HepG2 (cell line): ENCODE measurements at regions of chr2 and their contacts with region 1.

Region 1: DNA sequence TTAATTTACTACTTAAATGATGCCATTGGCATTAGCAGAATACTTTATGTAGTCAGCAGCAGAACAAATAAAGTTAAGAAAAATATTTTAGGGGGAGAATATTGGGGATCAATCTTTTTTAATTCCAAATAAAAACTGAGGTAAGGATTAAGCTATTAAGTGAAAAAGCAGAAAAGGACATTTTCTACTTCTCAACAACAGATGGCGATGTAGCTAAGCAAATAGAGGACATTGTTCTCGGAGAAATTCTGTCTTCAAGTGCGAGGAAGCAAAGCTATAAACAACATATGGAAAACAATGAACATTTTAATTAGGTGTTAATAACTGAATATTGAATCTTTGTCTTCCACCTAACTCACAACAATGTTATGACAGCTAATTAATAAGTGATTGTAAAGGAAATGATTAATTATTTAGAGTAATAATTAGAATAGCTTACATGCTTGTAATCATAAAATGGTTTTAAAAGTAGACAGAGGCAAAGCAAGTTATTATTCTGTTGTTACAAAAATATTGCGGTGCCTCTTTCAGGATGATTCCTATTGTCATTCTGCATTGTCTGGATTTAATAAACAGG is 32.9 kb upstream of the CCDC93 start:
- DNase-seq: peak; percentile 42
- ATAC-seq: peak; percentile 50; the same call in 1 of the 3 replicates
- H3K4me3 ChIP-seq: peak overlapping the region in 2 of 3 experiments; percentile 19 to 41; a peak in 3 of 6 replicates
- H3K27ac ChIP-seq: no peak overlapping the region
- H3K4me1 ChIP-seq: peaks cover 18% of the 10 kb centered on the region; the same call in 1 of the 2 replicates
- H3K27me3 ChIP-seq: no peaks in the 10 kb centered on the region; a peak in 1 of 5 replicates
- CTCF ChIP-seq: peak; percentile 82
- EP300 ChIP-seq: no peak
- POLR2A ChIP-seq: no peak
- RAD21 ChIP-seq: peak; percentile 70

Region 2: DNA sequence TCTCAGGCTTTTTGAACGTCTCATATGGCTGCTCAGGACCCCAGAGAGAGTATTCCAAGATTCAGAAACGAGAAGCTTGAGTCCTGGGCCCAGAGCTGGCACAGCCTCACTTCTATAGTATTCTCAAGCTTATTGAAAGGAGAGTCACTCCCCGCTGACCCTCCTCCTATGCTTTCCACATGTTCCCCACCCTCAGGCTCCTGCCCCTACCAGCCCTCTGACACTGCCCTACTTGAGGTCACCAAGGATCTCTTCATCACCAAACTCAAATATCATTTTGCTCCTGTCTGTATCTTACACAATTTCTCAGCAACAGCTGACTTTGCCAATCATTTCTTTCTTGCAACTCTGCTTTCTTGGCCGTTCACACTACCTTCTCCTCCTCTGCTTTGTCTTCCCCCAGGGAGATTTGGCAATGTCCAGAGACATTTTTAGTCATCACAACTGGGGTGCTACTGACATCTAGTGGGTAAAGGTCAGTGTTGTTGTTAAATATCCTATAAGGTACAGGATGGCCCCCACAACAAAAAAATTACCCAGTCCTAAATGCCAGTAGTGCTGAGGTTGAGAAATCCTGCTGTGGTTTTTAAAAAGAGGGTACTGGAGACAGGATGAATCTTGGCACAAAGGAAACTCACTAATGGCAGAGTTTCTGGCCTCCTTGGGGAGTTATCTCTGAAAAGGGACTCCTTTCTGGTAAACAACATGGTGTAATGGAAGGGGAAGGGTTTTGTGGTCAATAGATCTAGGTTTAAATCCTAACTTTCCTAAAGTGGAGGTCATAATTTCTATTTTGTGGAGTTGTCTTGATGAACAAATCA is 14.6 kb after region 1 on chr2:
- CTCF ChIA-PET with region 1: interaction called, 16 read pairs
- POLR2A ChIA-PET with region 1: no interaction called
- in situ Hi-C with region 1: no loop called
- intact Hi-C with region 1: loop called (anchors 1 kb)
- DNase-seq: peak; percentile 52
- ATAC-seq: peak; percentile 88
- H3K4me3 ChIP-seq: no peak overlapping the region
- H3K27ac ChIP-seq: no peak overlapping the region
- H3K4me1 ChIP-seq: peaks cover 34% of the 10 kb centered on the region
- H3K27me3 ChIP-seq: peaks cover 0 to 12% of the 10 kb centered on the region in 2 experiments; a peak in 1 of 5 replicates
- CTCF ChIP-seq: peak; percentile 72
- EP300 ChIP-seq: no peak
- POLR2A ChIP-seq: no peak
- RAD21 ChIP-seq: peak; percentile 44; the same call in 1 of the 2 replicates

Region 3: GRCh38 chr2:118073296-118073695 is 26.6 kb after region 1 on chr2:
- CTCF ChIA-PET with region 1: no interaction called
- POLR2A ChIA-PET with region 1: no interaction called
- in situ Hi-C with region 1: no loop called
- intact Hi-C with region 1: no loop called
- DNase-seq: no peak
- ATAC-seq: no peak
- H3K4me3 ChIP-seq: no peak overlapping the region
- H3K27ac ChIP-seq: no peak overlapping the region
- H3K4me1 ChIP-seq: peaks cover 13% of the 10 kb centered on the region
- H3K27me3 ChIP-seq: no peaks in the 10 kb centered on the region
- CTCF ChIP-seq: no peak
- EP300 ChIP-seq: no peak
- POLR2A ChIP-seq: no peak
- RAD21 ChIP-seq: no peak

Region 4: DNA sequence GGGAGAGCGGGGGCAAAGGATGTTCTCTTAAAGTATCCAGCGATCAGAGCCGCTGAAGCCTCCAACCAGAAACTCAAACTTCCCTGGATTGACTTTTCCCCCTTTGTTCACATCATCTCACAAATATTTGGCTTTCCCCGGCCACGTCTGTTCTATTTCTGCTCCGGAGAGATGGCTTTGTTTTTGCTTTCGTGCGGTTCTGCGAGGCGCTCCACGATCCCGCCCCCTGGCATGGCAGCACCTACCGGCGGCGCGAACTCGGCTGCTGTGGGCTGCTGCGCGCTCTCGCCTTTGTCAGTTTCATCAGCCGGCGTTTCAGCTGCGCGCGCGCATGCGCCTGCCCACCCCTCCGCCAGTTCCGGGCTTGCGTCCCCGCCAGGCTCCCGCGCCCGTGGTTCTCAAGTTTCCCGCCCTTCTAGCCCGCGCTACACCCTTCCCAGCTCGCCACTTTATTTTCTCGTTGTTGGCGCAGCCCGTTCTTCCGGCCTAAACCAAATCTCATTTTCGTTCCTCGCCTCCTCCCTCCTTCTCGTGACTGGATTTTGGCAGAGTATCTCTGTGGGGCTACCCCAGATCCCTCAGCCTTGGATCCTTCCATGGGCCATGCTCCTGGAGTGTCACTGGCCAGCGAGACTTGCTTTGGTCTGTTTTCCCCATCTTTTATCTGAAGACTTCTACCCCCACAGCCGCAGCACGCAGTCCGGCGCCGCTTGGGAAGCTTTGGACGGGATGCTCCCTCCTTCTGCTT is 139.6 kb after region 1 on chr2:
- CTCF ChIA-PET with region 1: no interaction called
- POLR2A ChIA-PET with region 1: no interaction called
- in situ Hi-C with region 1: no loop called
- intact Hi-C with region 1: loop called (anchors 5 kb)
- DNase-seq: no peak
- ATAC-seq: peak; percentile 42
- H3K4me3 ChIP-seq: peak overlapping the region; percentile 24 to 63 (median 50); a peak in 5 of 6 replicates
- H3K27ac ChIP-seq: no peak overlapping the region
- H3K4me1 ChIP-seq: peaks cover 16% of the 10 kb centered on the region; the same call in 1 of the 2 replicates
- H3K27me3 ChIP-seq: peaks cover 0 to 18% of the 10 kb centered on the region in 2 experiments; a peak in 2 of 5 replicates
- CTCF ChIP-seq: no peak
- EP300 ChIP-seq: no peak
- POLR2A ChIP-seq: no peak
- RAD21 ChIP-seq: no peak

Region 5: DNA sequence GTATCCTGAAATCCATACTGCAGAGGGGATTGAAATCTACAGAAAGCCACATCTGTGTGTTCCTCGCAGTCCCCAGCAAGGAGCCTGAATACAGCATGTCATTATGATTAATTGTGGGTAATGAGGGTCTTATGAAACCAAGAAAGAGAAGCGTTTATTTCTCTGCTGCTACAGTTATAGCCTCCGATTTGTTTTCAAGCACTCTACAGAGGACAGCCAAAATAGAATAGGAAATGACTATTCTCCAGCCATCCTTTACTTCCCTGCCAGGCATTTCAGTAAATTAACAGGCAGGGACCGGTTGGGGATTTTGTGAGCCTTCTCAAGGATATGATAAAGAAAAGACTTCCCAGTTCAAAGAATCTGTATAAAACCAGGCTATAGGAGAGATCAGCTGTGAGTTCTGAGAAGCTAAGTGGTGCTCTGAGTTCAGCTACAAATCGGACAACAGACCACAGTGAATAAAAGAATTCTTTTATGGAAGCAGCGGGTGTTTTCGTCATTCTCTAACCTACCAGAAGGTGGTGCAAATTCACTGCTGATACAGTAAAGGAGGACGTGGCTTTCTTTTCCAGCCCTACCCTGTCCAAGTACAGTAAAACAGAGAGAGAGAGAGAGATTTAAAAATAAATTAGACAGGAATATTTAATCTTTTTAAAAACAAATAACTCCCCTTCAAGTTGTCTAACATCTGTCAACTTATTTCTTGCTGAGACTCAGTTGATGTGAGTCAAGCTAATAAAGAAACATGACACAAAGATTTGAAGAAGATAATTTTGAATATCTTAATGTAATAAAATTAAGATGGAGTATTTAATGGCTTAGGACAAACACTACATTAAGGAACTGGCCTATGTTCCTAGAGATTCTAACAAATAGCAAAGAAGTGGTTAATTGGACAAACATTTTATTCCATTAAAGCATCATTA is 175.2 kb after region 1 on chr2:
- CTCF ChIA-PET with region 1: interaction called, 4 read pairs
- POLR2A ChIA-PET with region 1: no interaction called
- in situ Hi-C with region 1: no loop called
- intact Hi-C with region 1: loop called (anchors 5 kb)
- DNase-seq: peak; percentile 61
- ATAC-seq: peak; percentile 97
- H3K4me3 ChIP-seq: no peak overlapping the region
- H3K27ac ChIP-seq: no peak overlapping the region
- H3K4me1 ChIP-seq: no peaks in the 10 kb centered on the region
- H3K27me3 ChIP-seq: peaks cover 2 to 14% of the 10 kb centered on the region in 2 experiments; a peak in 3 of 5 replicates
- CTCF ChIP-seq: peak; percentile 81
- EP300 ChIP-seq: no peak
- POLR2A ChIP-seq: no peak
- RAD21 ChIP-seq: peak; percentile 50; the same call in 1 of the 2 replicates

Region 6: DNA sequence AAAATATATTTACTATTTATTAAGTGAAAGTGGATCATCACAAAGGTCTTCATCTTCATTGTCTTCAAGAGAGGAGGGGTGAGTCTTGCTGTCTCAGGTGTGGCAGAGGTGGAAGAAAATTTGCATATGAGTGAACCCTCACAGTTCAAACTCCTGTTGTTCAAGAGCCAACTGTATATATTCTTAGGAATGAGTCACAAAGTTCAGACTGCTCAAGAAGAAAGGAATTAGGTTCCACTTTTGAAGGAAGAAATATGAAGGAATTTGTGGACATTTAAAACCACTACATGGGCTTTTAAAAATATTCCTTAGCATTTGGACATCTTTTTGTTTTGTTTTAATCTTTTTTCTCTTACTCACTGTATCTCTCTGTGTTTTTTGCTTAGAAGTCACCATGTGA is 254.1 kb after region 1 on chr2:
- CTCF ChIA-PET with region 1: no interaction called
- POLR2A ChIA-PET with region 1: no interaction called
- in situ Hi-C with region 1: no loop called
- intact Hi-C with region 1: no loop called
- DNase-seq: no peak
- ATAC-seq: no peak
- H3K4me3 ChIP-seq: no peak overlapping the region
- H3K27ac ChIP-seq: no peak overlapping the region
- H3K4me1 ChIP-seq: no peaks in the 10 kb centered on the region
- H3K27me3 ChIP-seq: no peaks in the 10 kb centered on the region
- CTCF ChIP-seq: no peak
- EP300 ChIP-seq: no peak
- POLR2A ChIP-seq: no peak
- RAD21 ChIP-seq: no peak

Region 7: DNA sequence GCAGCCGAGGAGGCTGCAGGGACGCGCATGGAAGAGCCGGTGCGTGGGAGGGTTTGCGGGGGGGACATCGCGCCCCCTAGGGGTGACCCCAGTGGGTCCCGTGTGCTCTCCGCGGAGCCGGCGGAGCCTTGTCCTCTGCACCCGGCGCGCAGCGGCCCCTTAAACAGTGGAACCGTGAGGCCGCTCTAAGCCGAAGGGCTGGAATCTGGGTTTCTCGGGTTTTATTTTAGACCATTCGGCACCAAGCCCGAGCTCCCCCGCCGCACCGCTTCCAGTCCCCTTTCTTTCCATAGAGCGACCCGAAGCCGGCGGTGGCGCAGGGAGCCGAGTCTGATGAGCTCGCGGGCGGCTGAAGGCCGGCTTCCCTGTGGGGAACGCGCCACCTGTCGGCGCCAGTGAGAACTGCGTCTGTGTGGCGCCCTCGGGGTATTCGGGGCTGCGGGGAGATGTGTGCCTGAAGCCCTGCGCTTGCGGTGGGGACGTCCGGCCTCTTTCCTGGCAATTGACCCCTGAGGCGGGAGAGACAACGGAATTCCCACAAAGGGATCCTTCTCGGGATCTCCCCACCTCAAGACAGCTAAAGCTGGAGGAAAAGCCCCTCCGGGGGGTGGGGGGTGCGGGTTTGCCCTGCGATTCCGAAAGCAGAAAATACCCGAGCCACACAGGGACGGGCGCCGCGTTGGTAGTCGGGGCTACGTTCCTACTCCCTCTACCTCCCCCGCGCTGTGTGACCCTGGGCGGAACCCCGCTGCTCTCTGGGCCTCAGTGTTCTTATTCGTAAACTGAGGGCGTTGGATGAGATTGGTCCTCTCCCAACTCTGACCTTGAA is 808.9 kb after region 1 on chr2:
- CTCF ChIA-PET with region 1: no interaction called
- POLR2A ChIA-PET with region 1: no interaction called
- in situ Hi-C with region 1: loop called (anchors 10 kb)
- intact Hi-C with region 1: loop called (anchors 5 kb)
- DNase-seq: peak; percentile 60
- ATAC-seq: peak; percentile 93
- H3K4me3 ChIP-seq: peak overlapping the region in 1 of 3 experiments; percentile 34; a peak in 1 of 6 replicates
- H3K27ac ChIP-seq: no peak overlapping the region
- H3K4me1 ChIP-seq: no peaks in the 10 kb centered on the region
- H3K27me3 ChIP-seq: peaks cover 27 to 95% of the 10 kb centered on the region in 2 experiments
- CTCF ChIP-seq: peak; percentile 98
- EP300 ChIP-seq: no peak
- POLR2A ChIP-seq: no peak
- RAD21 ChIP-seq: peak; percentile 97